HCT116 (cell line): ENCODE measurements at regions of chr11 and their contacts with region 1.

Region 1: DNA sequence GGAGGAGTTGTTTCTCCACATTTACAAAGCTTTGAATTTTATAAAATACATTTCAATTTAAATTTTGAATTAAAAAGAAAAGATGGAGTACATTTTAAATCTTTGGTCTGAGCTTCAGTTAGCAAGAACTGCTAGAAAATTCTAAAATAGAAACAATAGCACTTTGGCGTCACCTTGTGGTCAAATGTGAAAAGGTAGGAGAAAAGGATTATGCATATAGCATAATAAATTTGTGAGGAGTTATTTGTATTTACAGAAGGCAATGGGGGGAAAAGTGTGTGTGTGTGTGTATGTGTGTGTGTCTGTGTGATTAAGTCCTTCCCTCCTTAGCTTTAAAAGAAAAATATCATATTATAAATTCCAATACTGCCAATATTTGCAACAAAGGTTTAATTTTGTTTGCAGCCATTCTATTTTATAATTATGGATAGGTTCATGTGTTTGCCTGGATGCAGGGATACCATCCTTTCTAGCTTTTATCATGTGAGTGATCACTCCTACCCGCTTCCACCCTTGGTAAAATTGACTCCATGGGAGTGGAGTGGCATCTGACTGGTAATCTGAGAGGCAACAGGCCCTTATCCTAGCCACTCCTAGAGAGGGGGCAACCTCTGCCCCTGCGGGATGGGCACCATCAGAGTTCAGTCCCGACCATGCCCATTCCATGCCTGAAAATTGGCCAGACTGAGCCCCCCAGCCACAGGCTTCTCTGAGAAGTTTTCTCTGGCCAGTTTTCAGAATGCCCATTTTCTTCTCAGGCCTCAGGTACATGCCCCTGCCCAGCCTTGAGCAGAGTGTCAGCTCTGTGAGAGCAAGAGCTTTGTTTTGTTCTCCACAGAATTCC is 13.6 kb upstream of the LGR4 start:
- DNase-seq: peak; percentile 37
- ATAC-seq: peak; percentile 73
- H3K4me3 ChIP-seq: no peak overlapping the region
- H3K27ac ChIP-seq: no peak overlapping the region
- H3K4me1 ChIP-seq: no peaks in the 10 kb centered on the region
- H3K27me3 ChIP-seq: no peaks in the 10 kb centered on the region
- CTCF ChIP-seq: peak; percentile 82 to 92 (median 87)
- POLR2A ChIP-seq: no peak
- RAD21 ChIP-seq: peak; percentile 90

Region 2: GRCh38 chr11:26753723-26754504 is 732.2 kb before region 1 on chr11:
- CTCF ChIA-PET with region 1: no interaction called
- POLR2A ChIA-PET with region 1: no interaction called
- RAD21 ChIA-PET with region 1: no interaction called
- intact Hi-C with region 1: loop called (anchors 10 kb)
- DNase-seq: peak; percentile 2
- ATAC-seq: peak; percentile 49; the same call in 1 of the 2 replicates
- H3K4me3 ChIP-seq: no peak overlapping the region
- H3K27ac ChIP-seq: no peak overlapping the region
- H3K4me1 ChIP-seq: no peaks in the 10 kb centered on the region
- H3K27me3 ChIP-seq: no peaks in the 10 kb centered on the region
- CTCF ChIP-seq: peak; percentile 8 to 47 (median 23); a peak in 2 of 6 replicates
- POLR2A ChIP-seq: no peak
- RAD21 ChIP-seq: peak; percentile 28; the same call in 1 of the 2 replicates

Region 3: DNA sequence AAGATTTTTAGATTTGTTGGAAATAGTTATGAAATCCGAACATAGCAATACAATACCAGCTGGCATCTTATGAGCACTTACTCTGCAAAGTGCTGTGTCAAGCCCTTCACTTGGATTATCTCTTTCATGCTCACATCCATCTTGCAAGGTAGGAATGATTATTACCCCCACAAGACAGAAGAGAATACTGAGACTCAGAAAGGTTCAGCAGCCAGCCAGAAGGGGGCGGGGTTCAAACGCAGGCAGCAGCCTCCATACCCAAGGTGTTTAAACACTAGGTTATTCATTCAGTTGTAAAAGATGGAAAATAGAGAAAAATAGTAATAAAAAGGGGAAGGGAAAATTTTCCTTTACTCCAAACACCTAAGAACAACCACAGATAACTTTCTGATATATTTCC is 281.6 kb before region 1 on chr11:
- CTCF ChIA-PET with region 1: interaction called, 5 read pairs
- POLR2A ChIA-PET with region 1: no interaction called
- RAD21 ChIA-PET with region 1: no interaction called
- intact Hi-C with region 1: loop called (anchors 1 kb)
- DNase-seq: peak; percentile 15
- ATAC-seq: peak; percentile 87
- H3K4me3 ChIP-seq: no peak overlapping the region
- H3K27ac ChIP-seq: no peak overlapping the region
- H3K4me1 ChIP-seq: peaks cover 6 to 7% of the 10 kb centered on the region in 2 experiments; a peak in 3 of 4 replicates
- H3K27me3 ChIP-seq: no peaks in the 10 kb centered on the region
- CTCF ChIP-seq: peak; percentile 39 to 64 (median 56); a peak in 5 of 6 replicates
- POLR2A ChIP-seq: no peak
- RAD21 ChIP-seq: peak; percentile 57

Region 4: DNA sequence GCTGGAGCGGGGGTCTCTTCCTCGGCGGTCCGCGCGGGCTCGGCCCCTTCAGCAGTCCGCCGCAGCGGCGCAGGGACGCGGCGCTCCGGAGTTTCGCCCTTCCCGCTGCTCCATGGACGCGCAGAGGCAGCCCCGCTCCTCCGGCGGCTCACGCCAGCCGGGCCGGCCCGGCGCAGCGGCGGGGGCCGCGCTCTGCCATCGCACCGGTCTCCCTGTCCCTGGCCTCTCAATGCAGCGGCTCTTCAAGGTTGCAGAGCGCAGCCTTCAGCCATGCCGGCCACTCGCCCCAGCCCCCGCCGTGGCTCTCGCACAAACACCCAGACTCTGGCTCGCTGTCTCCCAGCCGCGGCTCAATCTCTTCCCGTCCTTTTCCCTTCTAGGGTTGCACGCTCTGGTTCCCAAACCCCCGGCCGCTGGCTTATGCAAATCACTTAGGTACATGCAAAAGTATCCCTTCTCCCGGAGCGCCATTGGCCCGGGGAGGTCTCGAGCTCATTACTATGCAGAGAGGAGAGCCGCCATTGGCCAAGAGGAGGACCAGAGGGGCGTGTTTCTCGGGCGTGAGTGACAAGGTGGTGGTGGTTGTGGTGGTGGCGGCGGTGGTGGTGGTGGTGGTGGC is 13.6 kb before region 1 on chr11 and contains the start of gene LGR4:
- CTCF ChIA-PET with region 1: interaction called, 16 read pairs
- POLR2A ChIA-PET with region 1: no interaction called
- RAD21 ChIA-PET with region 1: no interaction called
- intact Hi-C with region 1: no loop called
- DNase-seq: peak; percentile 83
- ATAC-seq: peak; percentile 97
- H3K4me3 ChIP-seq: peak within 1 kb of the TSS; percentile 59 to 68
- H3K27ac ChIP-seq: peak within 1 kb of the TSS; percentile 67; the same call in 1 of the 2 replicates
- H3K4me1 ChIP-seq: peaks cover 8 to 15% of the 10 kb centered on the region in 2 experiments; a peak in 3 of 4 replicates
- H3K27me3 ChIP-seq: no peaks in the 10 kb centered on the region
- CTCF ChIP-seq: no peak
- POLR2A ChIP-seq: no peak
- RAD21 ChIP-seq: no peak
- total RNA-seq, gene LGR4: 7.1 TPM